OCI-LY7 (cell line): ENCODE measurements at regions of chr14 and their contacts with region 1.

Region 1: GRCh38 chr14:67571272-67571850 is 28.7 kb downstream of the PIGH start:
- DNase-seq: peak; percentile 67
- H3K4me3 ChIP-seq: no peak overlapping the region
- H3K27ac ChIP-seq: no peak overlapping the region
- H3K4me1 ChIP-seq: no peaks in the 10 kb centered on the region
- CTCF ChIP-seq: peak; percentile 96

Region 2: GRCh38 chr14:67526676-67527459 is 44.5 kb before region 1 on chr14:
- CTCF ChIA-PET with region 1: interaction called, 6 read pairs
- POLR2A ChIA-PET with region 1: no interaction called
- intact Hi-C with region 1: loop called (anchors 2 kb)
- DNase-seq: peak; percentile 53
- H3K4me3 ChIP-seq: no peak overlapping the region
- H3K27ac ChIP-seq: no peak overlapping the region
- H3K4me1 ChIP-seq: no peaks in the 10 kb centered on the region
- CTCF ChIP-seq: peak; percentile 95

Region 3: GRCh38 chr14:67768219-67768618 is 196.9 kb after region 1 on chr14:
- CTCF ChIA-PET with region 1: no interaction called
- POLR2A ChIA-PET with region 1: no interaction called
- intact Hi-C with region 1: no loop called
- DNase-seq: no peak
- H3K4me3 ChIP-seq: no peak overlapping the region
- H3K27ac ChIP-seq: no peak overlapping the region
- H3K4me1 ChIP-seq: no peaks in the 10 kb centered on the region
- CTCF ChIP-seq: no peak

Region 4: GRCh38 chr14:68307014-68307789 is 735.8 kb after region 1 on chr14:
- CTCF ChIA-PET with region 1: no interaction called
- POLR2A ChIA-PET with region 1: no interaction called
- intact Hi-C with region 1: no loop called
- DNase-seq: no peak
- H3K4me3 ChIP-seq: no peak overlapping the region
- H3K27ac ChIP-seq: peak overlapping the region; percentile 49
- H3K4me1 ChIP-seq: peaks cover 64% of the 10 kb centered on the region
- CTCF ChIP-seq: no peak